ENCODE measurements at regions of chr9 and their contacts with region 1.

Region 1: DNA sequence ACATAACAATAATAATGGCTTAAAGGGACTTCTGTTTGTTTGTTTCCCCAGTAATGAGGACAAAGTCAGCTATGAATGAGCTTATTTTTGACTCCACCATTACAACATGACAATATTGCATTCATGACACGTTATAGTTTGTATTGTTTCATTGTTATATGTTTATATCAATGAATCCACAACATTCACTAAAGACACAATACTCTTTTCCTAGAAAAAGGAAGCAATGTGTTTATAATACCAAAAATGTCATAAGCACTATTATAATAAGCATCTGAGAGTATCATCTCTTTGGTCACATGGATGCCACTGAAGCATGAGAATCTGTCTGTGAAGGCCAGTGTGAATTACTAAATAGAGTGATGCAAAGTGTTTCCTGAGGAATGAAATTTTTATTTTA is 1026.9 kb upstream of the C9orf72 start:
- DNase-seq: no peak
- H3K4me3 Mint-ChIP-seq: no peak overlapping the region
- H3K27ac Mint-ChIP-seq: no peak overlapping the region
- H3K4me1 Mint-ChIP-seq: no peaks in the 10 kb centered on the region
- H3K27me3 Mint-ChIP-seq: no peaks in the 10 kb centered on the region
- CTCF ChIP-seq: no peak

Region 2: DNA sequence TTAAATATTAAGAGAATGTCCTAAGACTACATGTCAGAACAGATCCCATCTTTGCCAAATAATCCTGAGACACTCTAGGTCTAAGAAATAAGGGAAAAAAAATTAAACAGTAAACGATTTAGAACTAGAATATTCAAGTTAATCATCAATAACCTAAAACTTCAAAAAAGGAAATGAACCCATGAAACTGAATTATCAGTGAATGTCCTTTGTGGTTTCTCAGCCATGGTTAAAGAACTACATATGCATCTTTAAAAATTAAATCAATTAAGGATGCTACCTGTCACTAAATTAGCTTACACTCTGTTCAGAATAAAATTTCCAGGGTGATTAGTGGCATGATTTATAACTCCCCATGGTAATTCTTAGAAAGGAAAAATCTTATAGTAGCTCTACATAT is 177.0 kb before region 1 on chr9:
- CTCF ChIA-PET with region 1: no interaction called
- POLR2A ChIA-PET with region 1: no interaction called
- intact Hi-C with region 1: no loop called
- DNase-seq: no peak
- H3K4me3 Mint-ChIP-seq: no peak overlapping the region
- H3K27ac Mint-ChIP-seq: no peak overlapping the region
- H3K4me1 Mint-ChIP-seq: no peaks in the 10 kb centered on the region
- H3K27me3 Mint-ChIP-seq: no peaks in the 10 kb centered on the region
- CTCF ChIP-seq: no peak

Region 3: GRCh38 chr9:28668158-28668557 is 67.9 kb after region 1 on chr9:
- CTCF ChIA-PET with region 1: no interaction called
- POLR2A ChIA-PET with region 1: no interaction called
- intact Hi-C with region 1: loop called (anchors 10 kb)
- DNase-seq: no peak
- H3K4me3 Mint-ChIP-seq: no peak overlapping the region
- H3K27ac Mint-ChIP-seq: no peak overlapping the region
- H3K4me1 Mint-ChIP-seq: no peaks in the 10 kb centered on the region
- H3K27me3 Mint-ChIP-seq: no peaks in the 10 kb centered on the region
- CTCF ChIP-seq: no peak

Region 4: DNA sequence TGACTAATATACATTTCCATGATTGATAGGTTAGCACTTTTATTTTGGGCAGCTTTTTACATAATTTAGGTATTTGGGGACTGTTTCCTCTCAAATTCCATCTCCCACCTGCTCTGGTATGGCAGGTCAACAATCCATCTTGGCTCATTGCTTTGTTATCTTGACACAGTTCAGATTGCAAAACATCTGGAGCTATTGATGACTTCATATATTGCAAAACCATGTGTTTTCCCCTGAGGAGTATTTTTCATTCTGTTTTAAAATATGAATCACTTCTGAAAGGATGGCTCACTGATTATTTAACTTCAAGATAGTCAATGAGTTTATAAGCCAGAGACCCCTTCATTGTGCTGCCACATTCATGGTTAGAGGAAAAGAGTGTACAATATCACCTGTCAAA is 179.0 kb after region 1 on chr9:
- CTCF ChIA-PET with region 1: no interaction called
- POLR2A ChIA-PET with region 1: no interaction called
- intact Hi-C with region 1: no loop called
- DNase-seq: peak; percentile 69
- H3K4me3 Mint-ChIP-seq: no peak overlapping the region
- H3K27ac Mint-ChIP-seq: no peak overlapping the region
- H3K4me1 Mint-ChIP-seq: peaks cover 16% of the 10 kb centered on the region
- H3K27me3 Mint-ChIP-seq: no peaks in the 10 kb centered on the region
- CTCF ChIP-seq: no peak

Measured in MCF 10A (cell line).